ENCODE measurements at regions of chr16 and their contacts with region 1.

Region 1: DNA sequence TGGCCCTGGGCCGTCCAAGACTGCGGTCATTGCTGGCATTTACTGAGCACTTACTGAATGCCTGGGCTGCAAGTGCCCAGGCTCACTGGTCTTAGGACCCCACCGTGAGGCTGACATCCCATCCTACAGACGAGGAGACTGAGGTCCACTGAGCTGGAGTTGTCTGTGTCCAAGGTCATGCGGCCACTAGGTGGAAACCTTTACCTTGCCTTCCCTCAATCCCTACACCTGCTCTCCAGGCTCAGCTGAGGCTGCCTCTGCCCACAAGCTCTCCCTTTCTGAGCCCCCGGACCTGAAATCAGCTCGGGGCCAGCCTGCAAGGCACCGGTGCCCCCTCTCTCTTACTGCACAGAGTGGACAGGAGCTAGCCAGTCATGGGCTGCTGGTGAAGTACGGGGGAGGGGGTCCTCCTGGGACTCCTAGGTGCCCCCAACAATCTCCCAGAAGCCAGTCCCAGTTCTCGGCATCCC is 1.5 kb downstream of the CASKIN1 start:
- DNase-seq: peak; percentile 74
- H3K4me3 ChIP-seq: peak overlapping the region; percentile 21 to 53; a peak in 2 of 4 replicates
- H3K27ac ChIP-seq: no peak overlapping the region; a peak in 1 of 4 replicates
- H3K4me1 ChIP-seq: peaks cover 0 to 18% of the 10 kb centered on the region in 2 experiments; a peak in 1 of 4 replicates
- H3K27me3 ChIP-seq: no peaks in the 10 kb centered on the region
- CTCF ChIP-seq: peak; percentile 52
- EP300 ChIP-seq: no peak
- RAD21 ChIP-seq: peak; percentile 77

Region 2: GRCh38 chr16:2082160-2082982 is 112.5 kb before region 1 on chr16:
- CTCF ChIA-PET with region 1: no interaction called
- POLR2A ChIA-PET with region 1: no interaction called
- DNase-seq: no peak
- H3K4me3 ChIP-seq: no peak overlapping the region
- H3K27ac ChIP-seq: no peak overlapping the region
- H3K4me1 ChIP-seq: no peaks in the 10 kb centered on the region
- H3K27me3 ChIP-seq: no peaks in the 10 kb centered on the region
- CTCF ChIP-seq: no peak
- EP300 ChIP-seq: no peak
- RAD21 ChIP-seq: no peak

Region 3: GRCh38 chr16:2095315-2095853 is 99.5 kb before region 1 on chr16:
- CTCF ChIA-PET with region 1: no interaction called
- POLR2A ChIA-PET with region 1: no interaction called
- DNase-seq: no peak
- H3K4me3 ChIP-seq: no peak overlapping the region
- H3K27ac ChIP-seq: no peak overlapping the region
- H3K4me1 ChIP-seq: no peaks in the 10 kb centered on the region
- H3K27me3 ChIP-seq: no peaks in the 10 kb centered on the region
- CTCF ChIP-seq: no peak
- EP300 ChIP-seq: no peak
- RAD21 ChIP-seq: no peak

Region 4: GRCh38 chr16:2142942-2143877 is 51.7 kb before region 1 on chr16:
- CTCF ChIA-PET with region 1: no interaction called
- POLR2A ChIA-PET with region 1: no interaction called
- DNase-seq: no peak
- H3K4me3 ChIP-seq: no peak overlapping the region
- H3K27ac ChIP-seq: no peak overlapping the region
- H3K4me1 ChIP-seq: peaks cover 0 to 16% of the 10 kb centered on the region in 2 experiments; a peak in 2 of 4 replicates
- H3K27me3 ChIP-seq: no peaks in the 10 kb centered on the region
- CTCF ChIP-seq: no peak
- EP300 ChIP-seq: no peak
- RAD21 ChIP-seq: no peak

Region 5: DNA sequence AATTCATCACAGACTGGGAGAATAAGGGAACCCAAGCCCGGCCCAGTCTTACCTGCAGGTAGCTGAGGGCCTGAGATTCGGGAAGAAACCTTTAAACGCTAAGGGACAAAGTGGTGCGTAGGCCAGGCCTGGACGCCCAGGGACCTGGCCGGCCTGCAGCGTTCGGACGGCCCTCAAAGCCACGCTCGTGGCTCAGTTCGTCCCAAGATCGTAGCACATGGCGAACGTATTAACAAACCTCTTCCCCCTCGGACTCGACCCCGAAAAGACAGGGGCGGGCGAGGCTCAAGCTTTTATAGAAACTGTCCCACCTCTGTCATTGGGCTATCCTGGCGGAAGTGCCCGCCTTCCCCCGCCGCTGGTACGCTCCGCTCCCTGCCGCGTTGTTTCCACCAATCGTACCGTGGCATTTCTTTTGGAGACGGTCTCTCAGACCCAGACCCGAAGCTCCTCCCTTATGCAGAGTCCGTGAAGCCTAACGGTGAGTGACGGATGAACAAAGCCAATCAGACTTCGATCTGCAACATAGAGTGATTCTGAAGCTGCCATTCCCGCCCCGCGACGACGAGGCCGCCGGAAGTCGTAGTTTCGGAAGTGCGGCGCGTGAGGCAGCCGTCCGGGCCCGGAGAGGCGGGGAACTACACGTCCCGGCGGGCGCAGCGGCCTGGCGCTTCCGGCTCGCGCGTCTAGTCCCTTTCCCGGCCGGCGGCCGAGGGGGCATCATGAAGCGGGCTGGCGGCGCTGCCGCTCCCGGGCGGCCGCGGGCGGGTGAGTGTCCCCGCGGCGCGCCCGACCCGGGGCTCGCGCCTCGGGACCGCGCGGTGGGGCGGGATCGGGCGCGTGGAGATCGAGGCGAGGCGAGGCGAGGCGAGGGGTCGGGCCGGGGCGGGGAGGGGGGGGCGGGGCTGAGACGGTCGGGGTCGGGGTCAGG is 39.5 kb before region 1 on chr16 and contains the start of gene TRAF7:
- CTCF ChIA-PET with region 1: interaction called, 3 read pairs
- POLR2A ChIA-PET with region 1: interaction called, 18 read pairs
- DNase-seq: peak; percentile 96
- H3K4me3 ChIP-seq: peak within 1 kb of the TSS; percentile 100
- H3K27ac ChIP-seq: peak within 1 kb of the TSS; percentile 61 to 89; a peak in 3 of 4 replicates
- H3K4me1 ChIP-seq: peaks cover 37 to 67% of the 10 kb centered on the region in 2 experiments; a peak in 3 of 4 replicates
- H3K27me3 ChIP-seq: no peaks in the 10 kb centered on the region
- CTCF ChIP-seq: no peak
- EP300 ChIP-seq: peak in 1 of 2 experiments; percentile 26; a peak in 1 of 4 replicates
- RAD21 ChIP-seq: no peak
- polyA plus RNA-seq, gene TRAF7: 69.9 and 73.0 TPM in 2 replicates

Region 6: GRCh38 chr16:2183671-2184070 is 11.2 kb before region 1 on chr16:
- CTCF ChIA-PET with region 1: interaction called, 19 read pairs
- POLR2A ChIA-PET with region 1: interaction called, 5 read pairs
- DNase-seq: no peak
- H3K4me3 ChIP-seq: no peak overlapping the region
- H3K27ac ChIP-seq: no peak overlapping the region
- H3K4me1 ChIP-seq: no peaks in the 10 kb centered on the region
- H3K27me3 ChIP-seq: no peaks in the 10 kb centered on the region
- CTCF ChIP-seq: no peak
- EP300 ChIP-seq: no peak
- RAD21 ChIP-seq: no peak

Region 7: GRCh38 chr16:2205104-2205966 is 10.4 kb after region 1 on chr16 and contains the start of gene MLST8:
- CTCF ChIA-PET with region 1: interaction called, 19 read pairs
- POLR2A ChIA-PET with region 1: interaction called, 8 read pairs
- DNase-seq: peak; percentile 99
- H3K4me3 ChIP-seq: peak within 1 kb of the TSS; percentile 75 to 76
- H3K27ac ChIP-seq: peak within 1 kb of the TSS; percentile 84 to 97
- H3K4me1 ChIP-seq: peaks cover 0 to 19% of the 10 kb centered on the region in 2 experiments; a peak in 2 of 4 replicates
- H3K27me3 ChIP-seq: no peaks in the 10 kb centered on the region
- CTCF ChIP-seq: peak; percentile 39
- EP300 ChIP-seq: no peak
- RAD21 ChIP-seq: no peak
- polyA plus RNA-seq, gene MLST8: 70.3 and 85.4 TPM in 2 replicates

Region 8: GRCh38 chr16:2251483-2252240 is 56.8 kb after region 1 on chr16 and contains the start of gene ECI1:
- CTCF ChIA-PET with region 1: interaction called, 33 read pairs
- POLR2A ChIA-PET with region 1: interaction called, 5 read pairs
- DNase-seq: peak; percentile 100
- H3K4me3 ChIP-seq: peak within 1 kb of the TSS; percentile 50 to 81
- H3K27ac ChIP-seq: peak within 1 kb of the TSS; percentile 73 to 84
- H3K4me1 ChIP-seq: peaks cover 7 to 13% of the 10 kb centered on the region in 2 experiments; a peak in 1 of 4 replicates
- H3K27me3 ChIP-seq: no peaks in the 10 kb centered on the region
- CTCF ChIP-seq: peak; percentile 57
- EP300 ChIP-seq: 0 out of 4 replicates have a peak, but pooled peaks of 1 of the 2 experiments have one; percentile 14
- RAD21 ChIP-seq: peak; percentile 53
- polyA plus RNA-seq, gene ECI1: 53.3 and 61.8 TPM in 2 replicates

Region 9: GRCh38 chr16:2317231-2318020 is 122.5 kb after region 1 on chr16:
- CTCF ChIA-PET with region 1: no interaction called
- POLR2A ChIA-PET with region 1: no interaction called
- DNase-seq: no peak
- H3K4me3 ChIP-seq: no peak overlapping the region
- H3K27ac ChIP-seq: no peak overlapping the region
- H3K4me1 ChIP-seq: no peaks in the 10 kb centered on the region; a peak in 1 of 4 replicates
- H3K27me3 ChIP-seq: no peaks in the 10 kb centered on the region
- CTCF ChIP-seq: no peak
- EP300 ChIP-seq: no peak
- RAD21 ChIP-seq: no peak

Measured in SK-N-SH (cell line).